H1 (cell line): ENCODE measurements at regions of chr9 and their contacts with region 1.

Region 1: GRCh38 chr9:7234143-7234542 is 476.4 kb downstream of the KDM4C start:
- DNase-seq: peak; percentile 57 to 91
- H3K4me3 ChIP-seq: no peak overlapping the region
- H3K27ac ChIP-seq: no peak overlapping the region
- H3K4me1 ChIP-seq: peaks cover 0 to 4% (median 0%) of the 10 kb centered on the region in 4 experiments; a peak in 4 of 7 replicates
- H3K27me3 ChIP-seq: no peaks in the 10 kb centered on the region
- CTCF ChIP-seq: peak; percentile 52 to 99 (median 91)
- EP300 ChIP-seq: no peak
- POLR2A ChIP-seq: no peak
- RAD21 ChIP-seq: peak; percentile 72 to 81

Region 2: GRCh38 chr9:7209016-7209715 is 25.0 kb before region 1 on chr9:
- CTCF ChIA-PET with region 1: interaction called, 15 read pairs
- POLR2A ChIA-PET with region 1: no interaction called
- DNase-seq: no peak
- H3K4me3 ChIP-seq: no peak overlapping the region
- H3K27ac ChIP-seq: no peak overlapping the region
- H3K4me1 ChIP-seq: peaks cover 3 to 20% (median 9%) of the 10 kb centered on the region in 4 experiments; a peak in 5 of 7 replicates
- H3K27me3 ChIP-seq: no peaks in the 10 kb centered on the region; a peak in 2 of 7 replicates
- CTCF ChIP-seq: no peak
- EP300 ChIP-seq: no peak
- POLR2A ChIP-seq: no peak
- RAD21 ChIP-seq: no peak

Region 3: GRCh38 chr9:7223981-7224380 is 10.2 kb before region 1 on chr9:
- CTCF ChIA-PET with region 1: interaction called, 25 read pairs
- POLR2A ChIA-PET with region 1: no interaction called
- DNase-seq: no peak
- H3K4me3 ChIP-seq: no peak overlapping the region
- H3K27ac ChIP-seq: no peak overlapping the region
- H3K4me1 ChIP-seq: no peaks in the 10 kb centered on the region; a peak in 1 of 7 replicates
- H3K27me3 ChIP-seq: no peaks in the 10 kb centered on the region
- CTCF ChIP-seq: no peak
- EP300 ChIP-seq: no peak
- POLR2A ChIP-seq: no peak
- RAD21 ChIP-seq: no peak

Region 4: DNA sequence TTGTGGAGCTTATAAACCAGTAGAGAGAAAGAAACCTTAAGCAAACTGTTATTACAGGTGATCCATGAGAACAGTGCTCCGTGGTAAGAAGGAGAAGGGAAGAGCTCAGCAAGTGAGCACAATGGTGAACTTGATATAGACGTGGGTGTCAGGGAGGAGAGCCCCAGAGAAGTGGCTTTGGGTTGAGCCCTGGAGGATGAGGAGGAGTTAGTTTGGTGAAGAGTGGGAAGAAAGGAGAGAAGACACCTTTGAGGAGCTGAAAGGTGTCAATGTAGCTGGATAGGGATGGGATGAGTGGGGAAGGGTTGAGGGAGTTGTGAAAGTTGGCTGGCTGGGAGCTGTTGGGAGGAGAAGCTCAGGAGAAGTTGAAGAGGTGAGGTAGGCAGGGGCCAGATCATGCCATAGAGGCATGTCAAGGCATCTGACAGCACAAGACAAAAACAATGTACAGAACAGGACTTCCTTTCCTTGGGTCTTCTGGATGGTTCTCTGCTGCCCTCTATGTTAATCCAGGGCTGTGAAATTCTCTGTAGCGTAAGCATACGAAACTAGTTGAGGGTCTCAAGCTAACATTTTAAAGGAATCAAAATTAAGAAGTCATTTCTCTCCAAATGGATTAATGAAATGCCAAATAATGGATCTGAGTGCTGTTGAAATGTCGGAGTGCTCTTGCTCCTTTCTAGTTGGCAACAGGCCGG is 25.6 kb after region 1 on chr9:
- CTCF ChIA-PET with region 1: interaction called, 28 read pairs
- POLR2A ChIA-PET with region 1: no interaction called
- DNase-seq: no peak
- H3K4me3 ChIP-seq: no peak overlapping the region
- H3K27ac ChIP-seq: no peak overlapping the region
- H3K4me1 ChIP-seq: no peaks in the 10 kb centered on the region; a peak in 3 of 7 replicates
- H3K27me3 ChIP-seq: no peaks in the 10 kb centered on the region; a peak in 1 of 7 replicates
- CTCF ChIP-seq: peak in 1 of 3 experiments; percentile 33; a peak in 1 of 4 replicates
- EP300 ChIP-seq: no peak
- POLR2A ChIP-seq: no peak
- RAD21 ChIP-seq: peak; percentile 31 to 50; a peak in 3 of 4 replicates

Region 5: GRCh38 chr9:7336356-7337065 is 102.4 kb after region 1 on chr9:
- CTCF ChIA-PET with region 1: interaction called, 11 read pairs
- POLR2A ChIA-PET with region 1: no interaction called
- DNase-seq: no peak
- H3K4me3 ChIP-seq: no peak overlapping the region
- H3K27ac ChIP-seq: no peak overlapping the region
- H3K4me1 ChIP-seq: no peaks in the 10 kb centered on the region
- H3K27me3 ChIP-seq: no peaks in the 10 kb centered on the region
- CTCF ChIP-seq: no peak
- EP300 ChIP-seq: no peak
- POLR2A ChIP-seq: no peak
- RAD21 ChIP-seq: no peak